ENCODE measurements at regions of chr1 and their contacts with region 1.

Region 1: DNA sequence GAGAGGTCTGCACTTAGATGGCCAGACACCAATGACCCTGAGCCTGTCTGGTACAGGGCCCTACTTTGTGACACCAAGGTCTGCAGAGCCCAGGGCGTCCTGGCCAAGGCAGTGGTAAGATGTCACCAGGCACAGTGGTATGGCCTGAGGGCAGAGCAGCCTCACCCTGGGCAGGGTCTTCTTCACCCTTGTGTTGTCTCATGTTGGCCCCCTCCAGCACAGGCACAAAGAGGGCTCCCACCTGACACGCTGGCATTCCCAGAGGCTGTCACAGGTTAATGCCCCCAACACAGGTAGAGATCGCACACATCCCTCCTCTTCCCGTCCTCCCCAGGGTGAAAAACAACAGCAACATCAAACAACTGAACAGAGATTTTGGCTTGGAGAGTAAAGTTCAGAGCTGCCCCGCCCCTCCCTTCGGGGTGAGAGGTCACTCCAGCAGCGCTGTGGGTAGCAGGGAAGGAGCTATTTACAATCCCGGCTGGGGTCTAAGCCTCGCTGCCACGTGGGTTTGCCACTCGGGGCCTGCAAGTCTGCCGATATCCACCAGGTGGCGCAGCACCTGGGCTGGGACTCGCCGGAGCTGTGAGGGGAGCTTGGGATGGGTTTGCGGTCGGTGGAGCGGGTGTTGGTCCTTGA is 12.6 kb downstream of the EFNA3 start:
- DNase-seq: peak; percentile 85
- H3K4me3 ChIP-seq: no peak overlapping the region
- H3K27ac ChIP-seq: no peak overlapping the region
- H3K4me1 ChIP-seq: peaks cover 6% of the 10 kb centered on the region
- H3K27me3 ChIP-seq: no peaks in the 10 kb centered on the region
- CTCF ChIP-seq: peak; percentile 99

Region 2: GRCh38 chr1:155167166-155168104 is 76.2 kb after region 1 on chr1:
- intact Hi-C with region 1: loop called (anchors 1 kb)
- DNase-seq: peak; percentile 93
- H3K4me3 ChIP-seq: no peak overlapping the region
- H3K27ac ChIP-seq: no peak overlapping the region
- H3K4me1 ChIP-seq: peaks cover 13% of the 10 kb centered on the region
- H3K27me3 ChIP-seq: no peaks in the 10 kb centered on the region
- CTCF ChIP-seq: peak; percentile 89

Region 3: DNA sequence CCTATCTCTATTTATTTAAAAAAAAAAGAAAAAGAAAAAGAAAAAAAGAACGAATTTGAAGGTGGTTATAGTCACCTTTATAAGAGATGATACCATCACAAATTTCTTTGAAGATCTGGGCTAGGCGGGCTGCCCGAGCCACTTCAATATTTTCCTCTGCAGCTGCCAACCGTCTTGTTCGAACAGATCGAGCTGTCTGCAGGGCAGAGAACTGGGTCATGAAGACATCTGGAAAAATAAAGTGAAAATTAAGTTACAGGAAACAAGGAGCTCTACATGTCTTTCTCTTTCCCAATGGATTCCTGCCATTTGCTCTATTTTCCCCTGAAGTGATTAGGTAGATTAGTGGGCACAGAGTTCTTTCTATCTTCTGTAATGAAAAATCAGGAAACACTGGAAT is 261.4 kb after region 1 on chr1:
- intact Hi-C with region 1: no loop called
- DNase-seq: no peak
- H3K4me3 ChIP-seq: no peak overlapping the region
- H3K27ac ChIP-seq: no peak overlapping the region
- H3K4me1 ChIP-seq: no peaks in the 10 kb centered on the region
- H3K27me3 ChIP-seq: no peaks in the 10 kb centered on the region
- CTCF ChIP-seq: no peak